Gastrocnemius medialis (tissue), 4 donors: ENCODE measurements at regions of chr1 and their contacts with region 1.

Region 1: DNA sequence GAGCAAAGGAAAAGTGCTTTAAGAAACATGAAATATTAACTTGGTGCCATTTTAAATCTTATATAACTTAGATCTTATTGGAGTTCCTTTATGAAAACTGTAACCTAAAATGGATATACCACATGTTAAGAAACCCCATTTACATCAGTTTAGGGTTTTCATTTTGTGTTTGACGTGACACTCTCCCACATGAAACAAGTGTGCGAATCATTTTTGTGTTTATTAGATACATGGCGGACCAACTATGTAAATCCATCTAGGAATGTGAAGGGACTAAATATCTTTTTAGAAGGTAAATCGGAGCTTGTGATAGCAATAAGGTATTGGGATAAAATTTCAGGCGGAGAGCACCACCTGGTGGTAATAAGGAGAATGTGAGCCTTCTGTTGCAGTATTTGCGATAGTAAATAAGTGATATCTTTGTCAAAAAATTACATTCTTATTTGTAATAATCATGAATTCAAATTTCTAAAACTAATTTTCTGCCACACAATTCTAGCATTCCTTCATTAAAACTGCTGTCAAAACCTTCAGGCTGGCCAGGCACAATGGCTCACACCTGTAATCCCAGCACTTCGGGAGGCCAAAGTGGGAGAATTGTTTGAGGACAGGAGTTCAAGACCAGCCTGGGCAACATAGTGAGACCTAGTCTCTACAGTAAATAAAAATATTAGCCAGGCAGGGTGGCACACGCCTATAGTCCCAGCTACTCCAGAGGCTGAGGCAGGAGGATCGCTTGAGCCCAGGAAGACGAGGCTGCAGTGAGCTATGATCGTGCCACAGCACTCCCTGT is 31.3 kb downstream of the SMAP2 start:
- DNase-seq: no peak
- ATAC-seq: peak; percentile 52 to 78
- H3K4me3 ChIP-seq: no peak overlapping the region
- H3K27ac ChIP-seq: no peak overlapping the region
- H3K4me1 ChIP-seq: no peaks in the 10 kb centered on the region
- H3K27me3 ChIP-seq: no peaks in the 10 kb centered on the region
- CTCF ChIP-seq: peak; percentile 78 to 87 (median 82)
- POLR2A ChIP-seq: no peak

Region 2: DNA sequence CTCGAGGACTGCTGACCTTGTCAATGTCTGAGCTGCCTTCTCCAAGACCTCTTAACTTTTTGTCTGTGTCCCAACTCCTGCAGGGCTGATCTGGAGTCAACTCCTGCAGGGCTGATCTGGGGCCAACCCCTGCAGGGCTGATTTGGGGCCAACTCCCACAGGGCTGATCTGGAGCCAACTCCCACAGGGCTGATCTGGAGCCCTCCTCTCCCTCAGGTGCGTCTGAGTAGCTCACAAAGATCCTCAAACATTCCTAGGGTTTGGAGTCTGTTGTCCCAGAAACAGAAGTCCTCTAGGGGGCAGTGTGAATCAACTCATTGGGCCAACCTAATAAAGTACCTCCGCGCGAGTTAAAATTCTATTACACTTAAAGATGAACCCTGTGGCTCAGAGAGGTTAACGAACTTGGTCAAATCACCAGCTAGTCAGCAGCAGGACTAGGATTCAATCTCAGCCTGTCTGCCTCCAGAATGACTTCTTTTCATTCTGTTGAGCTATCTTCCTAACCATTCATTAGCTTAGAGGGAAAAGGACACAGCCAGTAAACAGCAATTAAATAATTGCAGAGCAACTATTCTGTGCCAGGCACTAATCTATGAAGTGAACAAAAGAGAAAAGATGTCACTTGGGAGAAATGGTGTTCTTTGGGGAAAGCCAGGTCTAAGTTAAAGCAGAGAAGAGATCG is 260.8 kb before region 1 on chr1:
- in situ Hi-C with region 1: loop called (anchors 5 to 10 kb)
- intact Hi-C with region 1: loop called (anchors 2 kb)
- DNase-seq: peak in 1 of 2 donors; percentile 25
- ATAC-seq: peak; percentile 70 to 77
- H3K4me3 ChIP-seq: no peak overlapping the region
- H3K27ac ChIP-seq: no peak overlapping the region
- H3K4me1 ChIP-seq: no peaks in the 10 kb centered on the region
- H3K27me3 ChIP-seq: peaks cover 0 to 9% (median 0%) of the 10 kb centered on the region in 3 donors
- CTCF ChIP-seq: peak; percentile 59 to 80 (median 64)
- POLR2A ChIP-seq: no peak

Region 3: DNA sequence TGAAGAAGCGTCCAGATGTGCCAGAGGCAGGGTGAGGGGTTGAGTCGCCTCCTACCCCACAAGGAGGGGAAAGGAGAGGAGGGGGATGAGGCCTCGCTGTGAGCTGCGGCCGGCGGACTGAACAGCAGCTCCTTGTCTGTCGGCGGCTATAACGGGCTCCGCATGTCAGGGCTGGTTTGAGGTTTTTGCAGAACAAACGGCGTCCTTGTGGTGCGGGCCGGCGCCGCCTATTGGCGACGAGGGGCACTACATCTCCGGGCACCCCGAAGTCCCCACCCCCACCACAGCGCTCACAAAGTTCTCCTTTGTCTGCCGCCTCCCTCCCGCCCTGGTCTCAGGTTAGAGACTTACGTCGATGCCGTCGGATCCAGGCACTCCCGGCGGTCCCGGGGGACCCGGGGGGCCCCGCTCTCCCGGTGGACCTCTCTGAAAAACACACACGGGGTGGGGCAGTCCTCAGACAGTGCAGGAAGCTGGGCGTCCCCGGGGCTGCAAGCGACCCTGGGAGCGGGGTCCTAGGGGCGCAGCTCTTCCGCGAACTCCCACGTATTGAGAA is 89.5 kb before region 1 on chr1:
- in situ Hi-C with region 1: no loop called
- intact Hi-C with region 1: loop called (anchors 5 kb)
- DNase-seq: peak; percentile 34 to 58
- ATAC-seq: peak; percentile 54 to 92
- H3K4me3 ChIP-seq: peak overlapping the region; percentile 39 to 60 (median 46)
- H3K27ac ChIP-seq: no peak overlapping the region
- H3K4me1 ChIP-seq: peaks cover 4 to 8% of the 10 kb centered on the region in 2 donors
- H3K27me3 ChIP-seq: peaks cover 33 to 43% (median 39%) of the 10 kb centered on the region in 3 donors
- CTCF ChIP-seq: peak; percentile 73 to 90 (median 80)
- POLR2A ChIP-seq: no peak

Region 4: DNA sequence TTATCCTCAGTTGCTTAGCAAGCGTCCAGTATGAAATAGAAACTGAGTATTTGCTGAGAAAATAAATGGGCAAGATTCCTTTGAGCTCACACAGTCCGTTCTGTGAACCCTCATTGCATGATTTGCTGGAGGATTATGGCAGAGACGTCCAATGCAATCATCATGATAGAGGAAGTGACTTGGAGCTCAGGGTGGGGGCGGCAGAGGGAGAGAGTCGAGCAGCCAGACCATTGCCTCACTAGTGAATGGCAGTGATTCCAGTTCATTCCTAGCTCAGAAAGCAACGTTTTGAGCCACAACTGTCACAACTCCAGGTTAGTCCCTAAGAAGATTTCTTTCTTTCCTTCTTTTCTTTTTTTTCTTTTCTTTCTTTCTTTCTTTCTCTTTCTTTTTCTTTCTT is 60.3 kb before region 1 on chr1:
- in situ Hi-C with region 1: loop called in 1 of 4 experiments (anchors 10 kb)
- intact Hi-C with region 1: loop called (anchors 5 kb)
- DNase-seq: peak; percentile 20 to 36
- ATAC-seq: no peak
- H3K4me3 ChIP-seq: peak overlapping the region in 1 of 4 donors; percentile 11
- H3K27ac ChIP-seq: no peak overlapping the region
- H3K4me1 ChIP-seq: no peaks in the 10 kb centered on the region
- H3K27me3 ChIP-seq: no peaks in the 10 kb centered on the region
- CTCF ChIP-seq: no peak
- POLR2A ChIP-seq: no peak

Region 5: DNA sequence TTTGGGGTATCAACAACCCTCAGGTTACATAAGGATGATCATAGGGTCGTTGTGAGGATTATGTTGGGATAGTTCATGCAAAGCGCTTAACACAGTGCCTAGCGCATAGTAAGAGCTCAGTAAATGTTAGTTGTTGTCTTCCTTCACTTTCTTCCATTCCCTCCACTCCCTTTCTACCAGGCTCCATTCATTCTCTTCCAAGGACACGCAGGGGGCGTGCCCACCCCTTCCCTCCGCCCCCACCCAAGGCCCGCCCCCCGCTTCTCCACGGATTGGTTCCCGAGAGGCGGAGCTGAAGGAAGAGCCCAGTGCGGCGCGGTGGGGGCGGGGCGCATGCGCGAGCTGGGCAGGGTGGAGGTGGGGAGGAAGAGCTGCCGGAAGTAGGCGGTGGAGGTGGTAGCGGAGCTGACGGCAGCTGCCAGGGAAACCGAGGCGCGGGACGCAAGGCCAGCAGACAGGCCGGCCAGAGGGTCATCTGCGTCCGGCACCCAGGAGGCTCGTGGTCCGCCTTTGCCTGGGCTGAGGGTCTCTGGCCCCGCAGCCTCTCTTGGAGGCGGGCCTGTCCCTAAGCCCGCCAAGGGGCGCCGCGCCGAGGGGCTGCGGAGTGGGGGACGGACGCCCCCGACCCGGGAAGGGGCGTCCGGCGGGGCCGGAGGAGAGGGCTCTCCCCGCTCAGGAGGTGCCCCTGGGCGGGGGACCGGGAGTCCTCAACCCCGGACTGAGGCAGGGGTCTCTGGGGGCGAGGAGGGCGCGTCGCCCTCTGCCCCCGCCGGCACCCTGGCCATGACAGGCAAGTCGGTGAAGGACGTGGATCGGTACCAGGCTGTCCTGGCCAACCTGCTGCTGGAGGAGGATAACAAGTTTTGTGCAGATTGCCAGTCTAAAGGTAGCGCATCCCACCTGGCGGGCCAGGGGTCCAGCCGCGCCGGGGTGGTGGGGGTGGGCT is 31.3 kb before region 1 on chr1 and contains the start of gene SMAP2:
- in situ Hi-C with region 1: no loop called
- intact Hi-C with region 1: loop called (anchors 5 kb)
- DNase-seq: peak; percentile 93 to 95
- ATAC-seq: peak; percentile 91 to 94
- H3K4me3 ChIP-seq: peak within 1 kb of the TSS; percentile 90 to 98 (median 95)
- H3K27ac ChIP-seq: peak within 1 kb of the TSS; percentile 82 to 93 (median 86)
- H3K4me1 ChIP-seq: peaks cover 7 to 18% of the 10 kb centered on the region in 2 donors
- H3K27me3 ChIP-seq: no peaks in the 10 kb centered on the region
- CTCF ChIP-seq: no peak
- POLR2A ChIP-seq: peak; percentile 79 to 82
- total RNA-seq, gene SMAP2: 14.9 to 121 (median 47.5) TPM